Activated CD4-positive, alpha-beta T cell treated with anti-CD3 and anti-CD28 coated beads, Interleukin-2, amount 10 ng/mL, durations not matched to agents 24 days and 14 days (primary cell): ENCODE measurements at regions of chr18 and their contacts with region 1.

Region 1: GRCh38 chr18:23918401-23919032 is 96.0 kb upstream of the TTC39C start:
- DNase-seq: peak; percentile 93
- H3K4me3 Mint-ChIP-seq: no peak overlapping the region
- H3K27ac Mint-ChIP-seq: no peak overlapping the region
- H3K4me1 Mint-ChIP-seq: peaks cover 26% of the 10 kb centered on the region
- H3K27me3 Mint-ChIP-seq: peaks cover 21% of the 10 kb centered on the region

Region 2: DNA sequence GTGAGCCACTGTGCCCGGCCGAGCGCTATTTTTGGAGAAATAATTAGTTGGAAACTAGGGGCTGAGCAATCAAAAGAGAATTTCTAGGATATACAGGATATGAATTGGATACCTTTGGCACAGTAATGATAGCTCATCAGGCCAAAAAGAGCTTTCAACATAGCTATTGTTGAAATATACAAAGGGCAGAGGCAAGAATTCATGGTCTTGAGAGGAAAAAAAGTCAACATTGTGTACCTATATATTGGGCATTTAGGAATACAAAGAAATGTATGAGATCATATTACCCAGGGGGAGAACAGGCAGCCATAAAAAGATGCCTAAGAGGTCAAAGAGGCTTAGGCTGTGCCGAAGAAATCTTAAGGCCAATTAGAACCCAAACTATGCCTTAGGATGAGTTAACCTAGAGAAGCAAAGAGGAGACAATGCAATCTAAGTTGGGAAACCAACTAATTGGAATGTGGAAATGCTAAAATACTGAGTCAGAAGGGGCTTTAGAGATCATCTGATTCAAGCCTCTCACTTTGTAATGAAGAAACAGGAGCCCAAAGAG is 886.4 kb before region 1 on chr18:
- intact Hi-C with region 1: no loop called
- DNase-seq: no peak
- H3K4me3 Mint-ChIP-seq: no peak overlapping the region
- H3K27ac Mint-ChIP-seq: no peak overlapping the region
- H3K4me1 Mint-ChIP-seq: peaks cover 4% of the 10 kb centered on the region
- H3K27me3 Mint-ChIP-seq: no peaks in the 10 kb centered on the region

Region 3: GRCh38 chr18:23619388-23619881 is 299.1 kb before region 1 on chr18:
- intact Hi-C with region 1: loop called (anchors 5 kb)
- DNase-seq: peak; percentile 65
- H3K4me3 Mint-ChIP-seq: peak overlapping the region; percentile 39
- H3K27ac Mint-ChIP-seq: no peak overlapping the region
- H3K4me1 Mint-ChIP-seq: peaks cover 13% of the 10 kb centered on the region
- H3K27me3 Mint-ChIP-seq: peaks cover 50% of the 10 kb centered on the region

Region 4: DNA sequence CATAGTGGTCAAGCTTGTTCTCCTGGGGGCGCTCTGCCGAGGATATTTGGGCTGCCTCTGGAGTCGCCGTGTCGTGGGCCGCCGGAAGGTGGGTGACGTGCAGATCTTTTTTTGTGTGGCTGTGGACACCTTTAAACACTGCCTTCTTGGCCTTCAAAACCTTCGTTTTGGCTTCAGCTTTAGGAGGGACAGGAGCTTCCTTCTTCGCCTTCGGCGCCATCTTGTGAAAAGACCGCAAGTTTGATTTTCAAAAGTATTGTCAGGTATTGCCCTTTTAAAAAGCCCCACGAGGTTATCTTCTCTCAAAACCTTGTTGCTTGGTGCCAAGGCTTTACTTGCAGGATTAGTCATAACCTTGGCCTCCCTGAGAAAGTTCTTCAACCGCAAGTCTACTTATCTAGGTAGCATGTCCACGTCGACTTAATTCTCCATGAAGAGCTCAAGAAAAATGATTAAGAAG is 208.4 kb before region 1 on chr18:
- intact Hi-C with region 1: no loop called
- DNase-seq: no peak
- H3K4me3 Mint-ChIP-seq: no peak overlapping the region
- H3K27ac Mint-ChIP-seq: no peak overlapping the region
- H3K4me1 Mint-ChIP-seq: peaks cover 11% of the 10 kb centered on the region
- H3K27me3 Mint-ChIP-seq: peaks cover 11% of the 10 kb centered on the region

Region 5: GRCh38 chr18:23812546-23813440 is 105.7 kb before region 1 on chr18:
- intact Hi-C with region 1: loop called (anchors 2 kb)
- DNase-seq: no peak
- H3K4me3 Mint-ChIP-seq: no peak overlapping the region
- H3K27ac Mint-ChIP-seq: no peak overlapping the region
- H3K4me1 Mint-ChIP-seq: peaks cover 20% of the 10 kb centered on the region
- H3K27me3 Mint-ChIP-seq: peaks cover 28% of the 10 kb centered on the region

Region 6: DNA sequence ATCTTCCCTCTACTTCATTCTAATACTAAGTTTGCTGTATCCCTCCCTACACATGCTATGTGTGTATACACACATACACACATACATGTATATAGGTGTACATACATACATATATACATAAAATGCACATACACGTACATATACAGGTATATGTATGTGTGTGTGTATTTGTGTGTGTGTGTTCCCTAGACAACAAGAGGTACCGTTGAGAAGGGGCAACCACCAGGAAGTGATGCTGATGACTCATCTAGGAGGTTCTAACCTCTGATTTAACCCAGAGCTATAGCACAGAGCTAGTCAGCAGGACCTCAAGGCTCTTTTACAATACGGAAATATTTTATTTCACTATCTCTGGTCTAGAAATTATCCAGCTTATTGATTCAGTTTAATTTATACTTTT is 90.1 kb before region 1 on chr18:
- intact Hi-C with region 1: loop called (anchors 5 kb)
- DNase-seq: peak; percentile 89
- H3K4me3 Mint-ChIP-seq: no peak overlapping the region
- H3K27ac Mint-ChIP-seq: peak overlapping the region; percentile 79
- H3K4me1 Mint-ChIP-seq: peaks cover 37% of the 10 kb centered on the region
- H3K27me3 Mint-ChIP-seq: peaks cover 3% of the 10 kb centered on the region